Adrenal gland (tissue), 19 donors: ENCODE measurements at regions of chr19 and their contacts with region 1.

Region 1: GRCh38 chr19:7903244-7904073 is at the start of gene MAP2K7:
- DNase-seq: peak; percentile 99 to 100 (median 100)
- H3K4me3 ChIP-seq: peak within 1 kb of the TSS; percentile 33 to 94 (median 75)
- H3K27ac ChIP-seq: peak within 1 kb of the TSS in 4 of 5 donors; percentile 66 to 92 (median 90)
- H3K4me1 ChIP-seq: peaks cover 20 to 44% of the 10 kb centered on the region in 2 donors
- H3K27me3 ChIP-seq: no peaks in the 10 kb centered on the region
- CTCF ChIP-seq: peak; percentile 18 to 46 (median 36)
- POLR2A ChIP-seq: peak; percentile 69 to 94
- total RNA-seq, gene MAP2K7: 6.8 to 41.2 (median 19.4) TPM

Region 2: DNA sequence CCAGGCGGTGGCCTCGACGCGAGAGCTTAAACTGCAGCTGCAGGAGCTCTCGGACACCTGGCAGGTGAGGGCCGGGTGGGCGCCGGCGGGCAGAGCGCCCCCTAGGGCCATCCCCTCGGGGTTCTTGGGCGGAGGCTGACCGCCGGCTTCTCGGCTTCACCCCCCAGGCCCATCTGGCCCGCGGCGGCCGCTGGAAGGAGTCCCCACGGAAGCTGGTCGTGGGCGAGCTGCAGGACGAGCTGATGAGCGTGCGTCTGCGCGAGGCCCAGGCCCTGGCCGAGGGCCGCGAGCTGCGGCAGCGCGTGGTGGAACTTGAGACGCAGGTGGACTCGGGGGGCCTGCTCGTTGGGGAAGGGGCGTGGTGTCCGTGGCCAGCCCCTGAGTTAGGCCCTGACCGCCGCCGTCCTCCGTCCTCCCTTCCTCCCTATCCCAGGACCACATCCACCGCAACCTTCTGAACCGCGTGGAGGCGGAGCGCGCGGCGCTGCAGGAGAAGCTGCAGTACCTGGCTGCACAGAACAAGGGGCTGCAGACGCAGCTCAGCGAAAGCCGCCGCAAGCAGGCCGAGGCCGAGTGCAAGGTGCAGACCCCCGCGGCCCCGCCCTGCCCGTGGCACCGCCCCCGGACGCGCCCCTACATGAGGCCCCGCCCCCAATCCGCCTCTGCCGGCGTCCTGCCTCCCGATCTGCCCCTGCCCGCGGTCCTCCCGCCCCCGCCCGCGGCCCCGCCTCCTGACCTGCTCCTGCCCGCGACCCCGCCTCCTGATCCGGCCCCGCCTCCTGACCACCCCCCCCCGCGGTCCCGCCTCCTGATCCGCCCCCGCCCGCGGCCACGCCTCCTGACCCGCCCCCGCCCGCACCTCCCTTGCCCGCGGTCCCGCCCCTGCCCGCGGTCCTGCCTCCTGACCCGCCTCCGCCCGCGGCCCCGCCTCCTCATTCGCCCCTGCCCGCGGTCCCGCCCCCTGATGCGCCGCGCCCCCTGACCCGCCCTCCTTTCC is 41.2 kb before region 1 on chr19:
- intact Hi-C with region 1: loop called in 1 of 2 experiments (anchors 5 kb)
- DNase-seq: peak; percentile 85 to 91 (median 89)
- H3K4me3 ChIP-seq: peak overlapping the region in 1 of 4 donors; percentile 39
- H3K27ac ChIP-seq: peak overlapping the region in 1 of 5 donors; percentile 77
- H3K4me1 ChIP-seq: peaks cover 9 to 11% of the 10 kb centered on the region in 2 donors
- H3K27me3 ChIP-seq: no peaks in the 10 kb centered on the region
- CTCF ChIP-seq: no peak
- POLR2A ChIP-seq: no peak